ENCODE measurements at regions of chr5 and their contacts with region 1.

Region 1: DNA sequence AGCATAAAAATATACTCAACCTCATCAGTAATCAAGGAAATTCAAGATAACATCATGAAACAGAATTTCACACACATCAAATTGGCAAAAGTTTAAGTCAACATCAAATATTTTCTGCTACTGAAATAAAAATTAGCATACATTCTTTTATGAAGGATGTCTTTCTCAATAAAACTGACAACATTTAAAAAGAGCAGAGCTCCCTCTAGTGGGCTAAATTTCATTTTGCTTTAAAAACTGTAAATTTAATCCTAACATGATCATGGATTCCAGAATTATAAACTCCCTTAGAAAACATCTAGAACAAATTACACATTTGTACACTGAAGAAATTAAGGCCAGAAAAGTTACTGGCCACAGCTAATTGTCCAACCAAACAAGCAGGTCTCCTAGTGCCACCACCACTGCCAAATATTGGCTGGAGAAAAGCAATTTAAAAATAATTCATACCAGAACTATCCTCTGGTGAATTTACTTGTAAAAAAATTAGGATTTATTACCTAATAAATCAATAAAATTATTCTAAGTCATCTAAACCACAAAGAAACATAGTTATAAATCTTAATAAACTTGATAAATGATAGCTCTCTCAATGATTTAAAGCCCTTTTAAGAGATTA is 31.2 kb downstream of the DEPDC1B start:
- DNase-seq: no peak

Region 2: GRCh38 chr5:59819806-59820205 is 849.0 kb before region 1 on chr5:
- intact Hi-C with region 1: loop called (anchors 5 kb)
- DNase-seq: no peak

Region 3: DNA sequence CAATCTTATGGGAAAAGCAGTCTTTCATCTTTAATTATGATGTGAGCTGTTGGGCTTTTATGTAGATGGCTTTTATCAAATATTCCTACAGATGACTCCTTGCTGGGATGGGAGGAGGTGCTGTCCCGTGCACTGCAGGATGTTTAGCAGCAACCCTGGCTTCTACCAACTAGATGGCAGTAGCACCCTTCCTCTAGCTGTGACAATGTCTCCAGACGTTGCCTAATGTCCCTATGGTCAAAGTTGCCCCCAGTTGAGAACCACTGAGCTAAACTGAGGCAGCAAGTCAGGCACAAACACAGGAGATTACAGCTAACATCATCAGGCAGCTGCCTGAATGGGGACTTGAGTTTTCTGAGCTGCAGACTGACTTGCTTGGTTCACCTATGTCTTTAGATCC is 373.4 kb before region 1 on chr5:
- intact Hi-C with region 1: no loop called
- DNase-seq: no peak